Activated CD4-positive, alpha-beta memory T cell treated with anti-CD3 and anti-CD28 coated beads, Interleukin-2, amount 10 ng/mL, durations not matched to agents 7 days and 5 days (primary cell): ENCODE measurements at regions of chr7 and their contacts with region 1.

Region 1: GRCh38 chr7:2508327-2509215 is 11.0 kb upstream of the LFNG start:
- DNase-seq: peak; percentile 85
- H3K4me3 Mint-ChIP-seq: peak overlapping the region; percentile 67
- H3K27ac Mint-ChIP-seq: peak overlapping the region; percentile 87
- H3K4me1 Mint-ChIP-seq: peaks cover 57% of the 10 kb centered on the region
- H3K27me3 Mint-ChIP-seq: no peaks in the 10 kb centered on the region

Region 2: GRCh38 chr7:2411815-2412586 is 96.6 kb before region 1 on chr7:
- CTCF ChIA-PET with region 1: no interaction called
- POLR2A ChIA-PET with region 1: no interaction called
- DNase-seq: no peak
- H3K4me3 Mint-ChIP-seq: no peak overlapping the region
- H3K27ac Mint-ChIP-seq: no peak overlapping the region
- H3K4me1 Mint-ChIP-seq: peaks cover 69% of the 10 kb centered on the region
- H3K27me3 Mint-ChIP-seq: no peaks in the 10 kb centered on the region

Region 3: GRCh38 chr7:2487586-2488271 is 20.8 kb before region 1 on chr7:
- CTCF ChIA-PET with region 1: no interaction called
- POLR2A ChIA-PET with region 1: no interaction called
- DNase-seq: no peak
- H3K4me3 Mint-ChIP-seq: no peak overlapping the region
- H3K27ac Mint-ChIP-seq: no peak overlapping the region
- H3K4me1 Mint-ChIP-seq: no peaks in the 10 kb centered on the region
- H3K27me3 Mint-ChIP-seq: peaks cover 14% of the 10 kb centered on the region

Region 4: GRCh38 chr7:2529161-2530070 is 20.8 kb after region 1 on chr7:
- CTCF ChIA-PET with region 1: no interaction called
- POLR2A ChIA-PET with region 1: interaction called, 80 read pairs
- DNase-seq: peak; percentile 70
- H3K4me3 Mint-ChIP-seq: peak overlapping the region; percentile 69
- H3K27ac Mint-ChIP-seq: peak overlapping the region; percentile 96
- H3K4me1 Mint-ChIP-seq: peaks cover 64% of the 10 kb centered on the region
- H3K27me3 Mint-ChIP-seq: no peaks in the 10 kb centered on the region